ENCODE measurements at regions of chr17 and their contacts with region 1.

Region 1: DNA sequence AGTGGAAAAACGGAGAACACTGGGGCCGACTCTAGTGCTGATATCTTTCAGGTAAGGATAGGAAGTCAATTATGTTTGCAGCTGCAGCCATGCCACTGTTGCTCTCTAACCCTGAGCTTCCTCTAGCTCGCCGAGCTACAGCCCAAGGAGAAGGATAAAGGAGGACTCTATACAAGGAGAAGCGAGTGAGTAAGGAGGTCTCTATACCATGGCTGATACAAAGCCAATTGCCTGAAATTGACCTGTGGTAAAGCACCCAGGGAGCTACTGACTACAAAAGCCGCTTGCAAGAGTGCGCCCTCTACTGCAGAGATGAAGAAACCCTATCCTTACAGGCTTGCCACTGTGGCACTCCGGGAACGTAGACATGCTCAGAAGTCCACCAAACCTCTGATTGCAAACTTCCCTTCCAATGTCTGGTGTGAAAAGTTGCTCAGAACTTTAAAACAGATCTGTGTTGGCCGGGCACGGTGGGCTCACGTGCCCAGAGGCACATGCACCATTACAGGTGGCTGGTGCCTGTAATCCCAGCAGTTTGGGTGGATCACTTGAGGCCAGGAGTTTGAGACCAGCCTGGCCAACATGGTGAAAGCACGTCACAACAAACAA is 10.8 kb upstream of the SLC46A1 start:
- DNase-seq: peak; percentile 18 to 58 (median 40)
- ATAC-seq: peak; percentile 89
- H3K4me3 ChIP-seq: no peak overlapping the region
- H3K4me3 Mint-ChIP-seq: peak overlapping the region in 1 of 10 donors; percentile 12
- H3K27ac ChIP-seq: no peak overlapping the region
- H3K27ac Mint-ChIP-seq: no peak overlapping the region
- H3K4me1 ChIP-seq: no peaks in the 10 kb centered on the region
- H3K4me1 Mint-ChIP-seq: peaks cover 0 to 6% (median 4%) of the 10 kb centered on the region in 7 donors
- H3K27me3 ChIP-seq: no peaks in the 10 kb centered on the region
- H3K27me3 Mint-ChIP-seq: peaks cover 0 to 27% (median 8%) of the 10 kb centered on the region in 5 donors

Region 2: GRCh38 chr17:28230011-28230410 is 186.8 kb before region 1 on chr17:
- CTCF ChIA-PET with region 1: interaction called, 7 read pairs
- POLR2A ChIA-PET with region 1: no interaction called
- intact Hi-C with region 1: loop called in 1 of 2 experiments (anchors 5 kb)
- DNase-seq: no peak
- ATAC-seq: peak; percentile 29
- H3K4me3 ChIP-seq: no peak overlapping the region
- H3K4me3 Mint-ChIP-seq: no peak overlapping the region
- H3K27ac ChIP-seq: no peak overlapping the region
- H3K27ac Mint-ChIP-seq: no peak overlapping the region
- H3K4me1 ChIP-seq: no peaks in the 10 kb centered on the region
- H3K4me1 Mint-ChIP-seq: peaks cover 8 to 15% (median 12%) of the 10 kb centered on the region in 7 donors
- H3K27me3 ChIP-seq: peaks cover 0 to 3% of the 10 kb centered on the region in 2 donors
- H3K27me3 Mint-ChIP-seq: peaks cover 43 to 66% (median 50%) of the 10 kb centered on the region in 5 donors

Region 3: DNA sequence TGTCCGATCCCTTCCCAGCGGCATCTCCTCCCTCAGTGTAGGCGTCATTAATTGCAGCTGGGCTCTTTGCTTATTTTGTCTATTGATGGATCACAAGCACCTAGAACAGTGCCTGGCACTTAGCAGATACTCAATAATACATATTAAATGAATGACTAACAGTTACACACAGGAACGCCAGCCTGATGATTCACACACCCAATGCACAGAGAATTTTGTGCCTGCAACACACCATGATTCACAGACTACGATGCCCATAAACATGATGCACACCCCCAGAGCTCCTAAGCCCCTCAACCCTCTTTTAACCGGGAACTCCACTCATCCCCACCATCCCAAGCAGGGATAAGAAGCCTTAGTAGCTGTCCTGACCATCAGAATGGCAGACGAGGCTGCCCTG is 164.4 kb before region 1 on chr17:
- CTCF ChIA-PET with region 1: no interaction called
- POLR2A ChIA-PET with region 1: no interaction called
- intact Hi-C with region 1: loop called in 1 of 2 experiments (anchors 5 kb)
- DNase-seq: no peak
- ATAC-seq: no peak
- H3K4me3 ChIP-seq: no peak overlapping the region
- H3K4me3 Mint-ChIP-seq: peak overlapping the region in 2 of 10 donors; percentile 84 to 86
- H3K27ac ChIP-seq: no peak overlapping the region
- H3K27ac Mint-ChIP-seq: peak overlapping the region in 1 of 9 donors; percentile 4
- H3K4me1 ChIP-seq: peaks cover 0 to 4% of the 10 kb centered on the region in 2 donors
- H3K4me1 Mint-ChIP-seq: peaks cover 6 to 10% (median 8%) of the 10 kb centered on the region in 7 donors
- H3K27me3 ChIP-seq: no peaks in the 10 kb centered on the region
- H3K27me3 Mint-ChIP-seq: peaks cover 4 to 23% (median 9%) of the 10 kb centered on the region in 5 donors

Region 4: DNA sequence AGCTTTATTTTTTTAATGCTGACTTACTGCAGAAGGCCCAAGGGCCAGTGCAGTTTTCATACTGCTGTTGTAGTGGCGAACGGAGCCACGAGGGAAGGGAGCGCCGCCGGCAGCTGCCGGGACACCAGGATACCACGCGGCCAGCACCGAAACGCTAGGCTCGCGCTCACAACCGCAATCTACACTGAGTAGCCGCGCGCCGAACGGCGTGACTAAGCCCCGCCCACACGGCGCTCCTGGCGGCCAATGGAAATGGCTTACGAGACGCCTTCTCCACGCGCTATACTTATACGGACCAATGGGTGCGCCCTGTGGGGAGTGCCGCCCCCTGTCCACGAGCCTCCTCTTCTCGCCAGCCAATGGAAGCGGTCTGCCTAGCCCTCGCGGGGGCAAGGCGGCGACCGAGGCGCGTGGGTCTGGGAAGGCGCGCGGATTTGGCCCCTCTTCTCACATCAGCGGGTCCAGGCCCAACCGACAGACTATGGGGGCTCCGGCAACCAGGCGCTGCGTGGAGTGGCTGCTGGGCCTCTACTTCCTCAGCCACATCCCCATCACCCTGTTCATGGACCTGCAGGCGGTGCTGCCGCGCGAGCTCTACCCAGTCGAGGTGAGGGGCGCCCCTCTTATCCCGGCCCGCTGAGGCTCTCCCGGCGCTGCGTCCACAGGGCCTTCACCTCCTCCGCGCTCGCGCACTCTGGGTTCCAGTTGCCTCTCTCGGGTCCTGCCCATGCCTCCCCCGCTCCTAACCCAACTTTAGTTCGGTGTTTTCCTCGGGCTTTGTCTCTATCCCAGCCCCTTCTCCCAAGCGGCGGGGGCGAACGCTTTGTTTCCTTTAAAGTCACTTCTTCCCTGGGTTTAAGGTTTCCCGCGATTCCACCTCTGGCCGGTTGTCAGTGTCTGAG is 97.8 kb before region 1 on chr17 and contains the start of gene TMEM97:
- CTCF ChIA-PET with region 1: interaction called, 4 read pairs
- POLR2A ChIA-PET with region 1: no interaction called
- intact Hi-C with region 1: loop called in 1 of 2 experiments (anchors 1 kb)
- DNase-seq: peak; percentile 83 to 95 (median 93)
- ATAC-seq: peak; percentile 99
- H3K4me3 ChIP-seq: peak within 1 kb of the TSS; percentile 69
- H3K4me3 Mint-ChIP-seq: peak within 1 kb of the TSS; percentile 77 to 97 (median 91)
- H3K27ac ChIP-seq: peak within 1 kb of the TSS; percentile 64
- H3K27ac Mint-ChIP-seq: peak within 1 kb of the TSS; percentile 37 to 90 (median 80)
- H3K4me1 ChIP-seq: peaks cover 11 to 12% of the 10 kb centered on the region in 2 donors
- H3K4me1 Mint-ChIP-seq: peaks cover 9 to 40% (median 21%) of the 10 kb centered on the region in 7 donors
- H3K27me3 ChIP-seq: no peaks in the 10 kb centered on the region
- H3K27me3 Mint-ChIP-seq: no peaks in the 10 kb centered on the region
- total RNA-seq, gene TMEM97: 2.9 to 19.9 (median 4.8) TPM

Region 5: GRCh38 chr17:28384281-28385036 is 32.3 kb before region 1 on chr17:
- CTCF ChIA-PET with region 1: no interaction called
- POLR2A ChIA-PET with region 1: no interaction called
- intact Hi-C with region 1: loop called in 1 of 2 experiments (anchors 5 kb)
- DNase-seq: peak; percentile 27 to 67 (median 57)
- ATAC-seq: peak; percentile 93
- H3K4me3 ChIP-seq: peak overlapping the region; percentile 78
- H3K4me3 Mint-ChIP-seq: peak overlapping the region; percentile 88 to 96 (median 94)
- H3K27ac ChIP-seq: peak overlapping the region; percentile 67
- H3K27ac Mint-ChIP-seq: peak overlapping the region; percentile 37 to 88 (median 77)
- H3K4me1 ChIP-seq: peaks cover 6 to 14% of the 10 kb centered on the region in 2 donors
- H3K4me1 Mint-ChIP-seq: peaks cover 8 to 48% (median 33%) of the 10 kb centered on the region in 7 donors
- H3K27me3 ChIP-seq: no peaks in the 10 kb centered on the region
- H3K27me3 Mint-ChIP-seq: peaks cover 0 to 10% (median 6%) of the 10 kb centered on the region in 5 donors

Region 6: GRCh38 chr17:28405632-28406472 is 11.0 kb before region 1 on chr17 and contains the start of gene SLC46A1:
- CTCF ChIA-PET with region 1: interaction called, 15 read pairs
- POLR2A ChIA-PET with region 1: no interaction called
- intact Hi-C with region 1: no loop called
- DNase-seq: peak in 7 of 9 donors; percentile 21 to 69 (median 30)
- ATAC-seq: peak; percentile 70
- H3K4me3 ChIP-seq: peak within 1 kb of the TSS; percentile 27
- H3K4me3 Mint-ChIP-seq: peak within 1 kb of the TSS; percentile 80 to 88 (median 83)
- H3K27ac ChIP-seq: peak within 1 kb of the TSS; percentile 52
- H3K27ac Mint-ChIP-seq: peak within 1 kb of the TSS in 5 of 9 donors; percentile 48 to 81 (median 68)
- H3K4me1 ChIP-seq: peaks cover 0 to 9% of the 10 kb centered on the region in 2 donors
- H3K4me1 Mint-ChIP-seq: peaks cover 4 to 18% (median 13%) of the 10 kb centered on the region in 7 donors
- H3K27me3 ChIP-seq: no peaks in the 10 kb centered on the region
- H3K27me3 Mint-ChIP-seq: peaks cover 0 to 24% (median 8%) of the 10 kb centered on the region in 5 donors
- total RNA-seq, gene SLC46A1: 1.9 to 5.1 (median 3.6) TPM

Region 7: DNA sequence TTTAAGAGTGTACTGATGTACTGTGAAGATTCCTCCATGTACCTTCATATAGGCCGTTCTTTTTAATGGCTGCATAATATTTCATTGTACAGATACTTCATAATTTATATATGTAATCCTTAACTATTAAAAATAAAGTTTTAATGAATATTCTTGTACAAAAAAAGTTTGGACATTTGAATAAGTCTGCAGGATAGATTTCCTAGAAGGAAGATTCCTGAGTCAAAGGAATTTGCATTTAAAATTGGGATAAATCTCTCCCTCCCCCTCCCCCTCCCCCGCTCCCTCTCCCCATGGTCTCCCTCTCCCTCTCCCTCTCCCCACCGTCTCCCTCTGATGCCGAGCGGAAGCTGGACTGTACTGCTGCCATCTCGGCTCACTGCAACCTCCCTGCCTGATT is 41.1 kb after region 1 on chr17:
- CTCF ChIA-PET with region 1: no interaction called
- POLR2A ChIA-PET with region 1: no interaction called
- intact Hi-C with region 1: no loop called
- DNase-seq: no peak
- ATAC-seq: no peak
- H3K4me3 ChIP-seq: no peak overlapping the region
- H3K4me3 Mint-ChIP-seq: no peak overlapping the region
- H3K27ac ChIP-seq: no peak overlapping the region
- H3K27ac Mint-ChIP-seq: no peak overlapping the region
- H3K4me1 ChIP-seq: no peaks in the 10 kb centered on the region
- H3K4me1 Mint-ChIP-seq: no peaks in the 10 kb centered on the region
- H3K27me3 ChIP-seq: no peaks in the 10 kb centered on the region
- H3K27me3 Mint-ChIP-seq: peaks cover 0 to 4% (median 0%) of the 10 kb centered on the region in 5 donors